SK-N-SH (cell line): ENCODE measurements at regions of chr1 and their contacts with region 1.

Region 1: GRCh38 chr1:156689035-156689952 is 12.1 kb upstream of the NES start:
- DNase-seq: peak; percentile 85
- H3K4me3 ChIP-seq: peak overlapping the region; percentile 39 to 51
- H3K27ac ChIP-seq: peak overlapping the region in 1 of 2 experiments; percentile 86; a peak in 2 of 4 replicates
- H3K4me1 ChIP-seq: peaks cover 13 to 52% of the 10 kb centered on the region in 2 experiments; a peak in 3 of 4 replicates
- H3K27me3 ChIP-seq: no peaks in the 10 kb centered on the region
- CTCF ChIP-seq: peak; percentile 74
- EP300 ChIP-seq: no peak
- RAD21 ChIP-seq: peak; percentile 99

Region 2: DNA sequence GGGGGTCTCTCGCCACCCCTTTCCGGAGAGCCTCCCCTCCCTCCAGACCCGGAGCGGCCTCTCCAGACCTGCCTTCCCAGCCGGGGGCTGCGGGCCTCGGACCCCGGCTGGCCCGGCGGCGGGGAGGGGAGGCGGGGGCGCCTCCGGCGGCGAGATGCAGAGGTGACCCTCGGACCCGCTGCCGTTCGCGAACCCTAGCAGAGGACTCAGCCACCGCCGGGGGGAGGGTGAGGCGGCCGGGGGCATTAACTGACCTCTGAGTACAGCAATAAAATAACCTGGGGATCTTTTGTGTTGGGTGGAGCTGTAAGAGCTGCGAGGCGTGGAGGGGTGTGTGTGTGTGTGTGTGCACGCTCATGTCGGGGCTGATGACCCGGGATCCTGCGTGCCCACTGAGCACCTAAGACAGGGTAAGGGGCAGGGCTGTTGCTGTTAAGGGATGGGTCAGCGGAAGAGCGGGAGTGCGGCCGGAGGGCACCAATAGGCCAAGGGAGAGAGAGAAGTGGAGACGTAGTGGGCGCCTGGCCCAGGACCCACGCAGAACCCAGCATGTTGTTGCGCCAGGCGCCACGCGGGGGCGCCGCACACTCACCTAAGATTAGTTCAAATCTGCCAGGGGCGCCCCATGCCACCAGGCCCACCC is 63.7 kb before region 1 on chr1:
- CTCF ChIA-PET with region 1: interaction called, 237 read pairs
- POLR2A ChIA-PET with region 1: no interaction called
- DNase-seq: peak; percentile 79
- H3K4me3 ChIP-seq: peak overlapping the region; percentile 10 to 31; a peak in 2 of 4 replicates
- H3K27ac ChIP-seq: no peak overlapping the region
- H3K4me1 ChIP-seq: peaks cover 0 to 13% of the 10 kb centered on the region in 2 experiments; a peak in 1 of 4 replicates
- H3K27me3 ChIP-seq: peaks cover 29% of the 10 kb centered on the region
- CTCF ChIP-seq: peak; percentile 96
- EP300 ChIP-seq: no peak
- RAD21 ChIP-seq: peak; percentile 76

Region 3: DNA sequence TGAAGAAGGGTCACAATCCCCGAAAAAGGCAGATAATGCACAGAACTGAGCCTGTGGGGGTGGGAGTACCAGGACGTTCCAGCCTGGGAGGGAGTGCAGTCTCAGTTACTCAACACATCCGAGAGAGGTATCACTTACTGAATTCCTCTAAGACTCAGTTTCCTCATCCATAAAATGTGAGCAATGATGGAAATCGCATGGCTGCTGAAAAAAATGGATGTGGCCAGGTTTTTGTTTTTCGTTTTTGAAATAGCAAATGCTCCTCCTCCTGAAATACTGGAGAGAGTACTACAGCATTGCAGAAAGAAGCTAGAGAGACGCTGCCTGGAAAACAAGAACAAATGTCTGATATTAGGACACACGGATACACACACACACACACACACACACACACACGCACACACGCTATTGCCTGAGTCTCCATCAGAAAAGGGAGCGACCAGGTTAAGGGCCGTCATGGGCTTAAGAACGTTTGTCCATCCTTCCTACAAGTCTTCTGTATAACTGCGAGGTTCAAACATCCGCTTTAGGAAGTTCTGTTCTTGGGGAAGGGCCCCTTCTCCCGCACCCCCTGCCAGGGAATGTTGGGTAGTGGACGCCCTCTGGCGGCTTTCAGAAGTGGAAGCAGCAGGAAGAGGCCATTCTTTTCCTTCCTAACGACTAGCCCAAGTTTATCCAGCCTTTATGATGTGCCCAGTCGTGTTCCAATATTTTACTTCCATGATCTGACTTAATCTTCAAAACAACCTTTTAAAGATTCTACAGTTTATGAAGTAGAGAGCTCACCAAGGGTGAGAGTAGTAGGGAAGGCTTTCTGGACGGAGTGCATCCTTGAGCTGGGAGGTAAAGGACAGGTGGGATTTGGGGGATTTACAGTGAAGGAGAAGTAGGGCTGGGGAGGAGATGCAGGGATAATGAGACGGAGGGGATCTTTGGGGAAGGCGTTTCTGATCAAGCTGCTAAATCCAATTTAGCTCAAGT is 11.4 kb before region 1 on chr1:
- CTCF ChIA-PET with region 1: interaction called, 182 read pairs
- POLR2A ChIA-PET with region 1: interaction called, 7 read pairs
- DNase-seq: peak; percentile 78
- H3K4me3 ChIP-seq: peak overlapping the region; percentile 55 to 71
- H3K27ac ChIP-seq: peak overlapping the region; percentile 40 to 67; a peak in 3 of 4 replicates
- H3K4me1 ChIP-seq: peaks cover 21 to 42% of the 10 kb centered on the region in 2 experiments; a peak in 3 of 4 replicates
- H3K27me3 ChIP-seq: no peaks in the 10 kb centered on the region
- CTCF ChIP-seq: peak; percentile 97
- EP300 ChIP-seq: no peak
- RAD21 ChIP-seq: peak; percentile 98

Region 4: DNA sequence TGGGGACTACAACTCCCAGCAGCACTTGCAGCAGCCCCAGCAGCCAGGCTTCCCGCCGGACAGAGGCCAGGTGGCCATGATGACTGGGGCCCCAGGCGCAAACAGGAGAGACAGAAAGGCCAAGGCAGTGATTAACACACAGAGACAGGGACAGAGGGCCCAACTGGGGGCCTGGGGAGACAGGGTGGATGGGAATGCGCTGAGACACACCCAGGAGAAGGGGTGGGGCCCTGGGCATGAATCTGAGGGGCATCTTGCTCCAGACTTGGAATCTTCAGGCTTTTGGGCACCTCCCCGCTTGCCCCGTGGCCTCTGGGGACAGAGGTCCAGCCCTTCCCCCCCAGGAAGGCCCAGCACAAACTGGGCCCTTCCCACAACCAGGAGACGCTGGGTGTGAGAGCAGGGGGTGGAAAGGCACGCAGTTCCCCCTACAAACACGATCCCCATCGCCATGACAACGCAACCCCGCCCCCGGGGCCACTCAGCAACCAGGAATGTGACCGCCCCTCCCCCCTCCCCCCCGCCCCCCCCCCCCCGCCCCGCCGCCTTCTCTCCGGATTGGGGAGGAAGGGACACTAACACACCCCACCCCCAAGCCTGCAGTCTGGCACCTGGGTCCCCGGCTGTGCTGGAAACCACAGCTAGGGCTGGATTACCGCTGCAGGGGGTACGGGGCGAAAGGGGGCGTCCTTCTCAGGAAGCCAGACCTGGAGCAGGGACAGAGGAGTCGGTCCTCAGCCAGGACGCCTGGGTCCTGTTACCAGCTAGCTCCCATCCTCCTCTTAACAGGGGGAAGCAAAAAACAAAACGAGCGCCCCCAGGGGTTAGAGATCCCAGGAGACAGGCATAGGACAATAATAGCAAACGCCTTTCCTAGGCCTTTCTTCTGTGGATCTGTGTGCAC is 57.7 kb after region 1 on chr1:
- CTCF ChIA-PET with region 1: interaction called, 42 read pairs
- POLR2A ChIA-PET with region 1: no interaction called
- DNase-seq: peak; percentile 91
- H3K4me3 ChIP-seq: peak overlapping the region; percentile 78 to 98
- H3K27ac ChIP-seq: peak overlapping the region; percentile 100
- H3K4me1 ChIP-seq: peaks cover 37 to 48% of the 10 kb centered on the region in 2 experiments
- H3K27me3 ChIP-seq: no peaks in the 10 kb centered on the region
- CTCF ChIP-seq: peak; percentile 46
- EP300 ChIP-seq: peak; percentile 14 to 34; a peak in 1 of 4 replicates
- RAD21 ChIP-seq: no peak

Region 5: DNA sequence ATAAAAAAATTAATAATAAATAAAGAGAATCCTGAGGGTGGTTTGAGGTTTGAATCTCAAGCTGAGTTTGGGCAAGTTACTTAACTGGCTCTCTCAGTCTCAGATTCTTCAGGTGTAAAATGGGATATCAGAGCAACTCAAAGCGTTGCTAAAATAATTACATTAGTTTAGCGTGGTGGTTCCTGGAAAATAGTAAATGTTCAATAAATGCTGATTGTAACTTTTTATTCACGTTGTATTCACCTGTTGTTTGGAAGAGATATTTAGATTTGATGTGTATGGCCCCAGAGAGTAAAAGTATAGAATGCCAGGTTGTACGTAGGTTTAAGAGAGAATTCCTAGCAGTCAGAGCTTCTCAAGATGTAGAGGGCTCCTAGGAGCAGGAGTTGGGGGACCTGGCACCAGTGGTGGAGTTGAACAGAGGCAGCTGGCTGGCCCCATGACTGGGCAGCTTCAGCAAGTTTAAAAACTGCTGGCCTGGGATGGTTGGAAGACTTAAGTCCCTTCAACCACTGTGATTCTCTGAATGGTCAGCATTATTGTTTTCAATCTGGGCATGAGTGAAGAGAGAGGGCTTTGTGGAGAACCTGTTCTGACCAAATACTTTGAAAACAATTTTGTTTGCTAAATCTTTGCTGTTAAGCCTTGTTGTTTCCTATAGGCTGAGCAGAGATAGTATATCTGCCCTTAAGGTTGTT is 100.5 kb after region 1 on chr1:
- CTCF ChIA-PET with region 1: interaction called, 14 read pairs
- POLR2A ChIA-PET with region 1: no interaction called
- DNase-seq: no peak
- H3K4me3 ChIP-seq: no peak overlapping the region
- H3K27ac ChIP-seq: no peak overlapping the region
- H3K4me1 ChIP-seq: no peaks in the 10 kb centered on the region; a peak in 1 of 4 replicates
- H3K27me3 ChIP-seq: no peaks in the 10 kb centered on the region
- CTCF ChIP-seq: no peak
- EP300 ChIP-seq: no peak
- RAD21 ChIP-seq: no peak

Region 6: GRCh38 chr1:156892190-156893047 is 203.1 kb after region 1 on chr1:
- CTCF ChIA-PET with region 1: interaction called, 114 read pairs
- POLR2A ChIA-PET with region 1: no interaction called
- DNase-seq: peak; percentile 94
- H3K4me3 ChIP-seq: no peak overlapping the region; a peak in 1 of 4 replicates
- H3K27ac ChIP-seq: no peak overlapping the region
- H3K4me1 ChIP-seq: peaks cover 23 to 38% of the 10 kb centered on the region in 2 experiments; a peak in 3 of 4 replicates
- H3K27me3 ChIP-seq: no peaks in the 10 kb centered on the region
- CTCF ChIP-seq: peak; percentile 92
- EP300 ChIP-seq: no peak
- RAD21 ChIP-seq: peak; percentile 75